ENCODE measurements at regions of chr4 and their contacts with region 1.

Region 1: GRCh38 chr4:6134612-6135220 is 65.6 kb downstream of the JAKMIP1 start:
- ATAC-seq: peak in 3 of 8 experiments; percentile 97 to 98 (median 97)
- H3K4me3 ChIP-seq: no peak overlapping the region
- H3K27ac ChIP-seq: no peak overlapping the region
- H3K4me1 ChIP-seq: no peaks in the 10 kb centered on the region

Region 2: GRCh38 chr4:5654791-5655190 is 479.9 kb before region 1 on chr4:
- in situ Hi-C with region 1: no loop called
- ATAC-seq: no peak
- H3K4me3 ChIP-seq: no peak overlapping the region
- H3K27ac ChIP-seq: no peak overlapping the region
- H3K4me1 ChIP-seq: peaks cover 0 to 11% of the 10 kb centered on the region in 2 donors

Region 3: GRCh38 chr4:5900844-5901243 is 233.9 kb before region 1 on chr4:
- in situ Hi-C with region 1: no loop called
- ATAC-seq: peak in 4 of 8 experiments; percentile 24 to 41 (median 30)
- H3K4me3 ChIP-seq: no peak overlapping the region
- H3K27ac ChIP-seq: no peak overlapping the region
- H3K4me1 ChIP-seq: peaks cover 0 to 20% of the 10 kb centered on the region in 2 donors

Region 4: GRCh38 chr4:6225469-6225868 is 90.8 kb after region 1 on chr4:
- in situ Hi-C with region 1: loop called in 1 of 9 experiments (anchors 25 kb)
- ATAC-seq: peak in 3 of 8 experiments; percentile 17 to 22 (median 21)
- H3K4me3 ChIP-seq: no peak overlapping the region
- H3K27ac ChIP-seq: no peak overlapping the region
- H3K4me1 ChIP-seq: peaks cover 3 to 4% of the 10 kb centered on the region in 2 donors

Region 5: DNA sequence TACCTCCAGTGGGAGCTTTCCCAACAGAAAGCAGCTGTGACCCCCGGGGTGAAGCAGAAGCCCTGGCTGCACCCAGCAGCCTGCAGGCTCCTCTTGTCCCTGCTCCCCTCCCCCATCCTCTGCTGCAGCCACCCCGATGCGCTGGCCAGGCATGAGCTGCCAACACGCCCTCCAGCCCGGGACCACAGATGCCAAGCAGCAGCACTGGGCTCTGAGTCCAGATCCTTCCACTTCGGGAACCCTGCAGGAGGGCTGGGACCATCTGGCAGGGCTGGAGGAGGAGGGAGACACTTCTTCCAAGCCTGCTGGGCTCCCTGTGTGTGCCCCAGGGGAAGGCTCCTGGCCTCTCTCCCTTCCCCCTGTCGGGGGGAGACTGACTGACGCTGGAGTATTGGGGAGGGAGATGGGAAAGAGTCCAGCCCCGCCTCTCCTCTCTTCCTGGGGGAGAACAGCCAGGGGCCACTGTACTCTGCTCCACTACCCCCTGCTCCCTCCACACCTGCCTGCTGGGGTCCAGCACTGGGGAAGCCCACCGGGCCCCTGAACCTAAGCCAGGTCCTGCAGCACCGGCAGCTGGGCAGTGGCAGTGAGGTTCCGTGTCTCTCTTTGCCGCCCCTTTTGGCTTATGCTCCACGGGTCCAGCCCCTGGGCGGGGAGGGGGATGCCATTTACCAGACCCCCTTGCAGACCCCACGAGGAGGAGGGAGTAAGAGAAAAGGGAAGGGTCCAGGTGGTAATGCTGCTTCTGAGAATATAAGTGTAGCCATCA is 282.0 kb after region 1 on chr4:
- in situ Hi-C with region 1: no loop called
- ATAC-seq: peak in 6 of 8 experiments; percentile 10 to 77 (median 62)
- H3K4me3 ChIP-seq: no peak overlapping the region
- H3K27ac ChIP-seq: peak overlapping the region in 1 of 2 donors; percentile 60
- H3K4me1 ChIP-seq: peaks cover 25 to 35% of the 10 kb centered on the region in 2 donors

Measured in motor neuron (in vitro differentiated cells).